Activated naive CD8-positive, alpha-beta T cell treated with anti-CD3 and anti-CD28 coated beads, Interleukin-2, amount 10 ng/mL, durations not matched to agents 7 days and 5 days (primary cell): ENCODE measurements at regions of chr12 and their contacts with region 1.

Region 1: GRCh38 chr12:9647825-9648700 is 21.4 kb upstream of the CLEC2D start:
- DNase-seq: peak; percentile 96
- ATAC-seq: peak; percentile 76
- H3K4me3 Mint-ChIP-seq: peak overlapping the region; percentile 97
- H3K27ac Mint-ChIP-seq: peak overlapping the region; percentile 99
- H3K4me1 Mint-ChIP-seq: peaks cover 60% of the 10 kb centered on the region
- H3K27me3 Mint-ChIP-seq: no peaks in the 10 kb centered on the region

Region 2: DNA sequence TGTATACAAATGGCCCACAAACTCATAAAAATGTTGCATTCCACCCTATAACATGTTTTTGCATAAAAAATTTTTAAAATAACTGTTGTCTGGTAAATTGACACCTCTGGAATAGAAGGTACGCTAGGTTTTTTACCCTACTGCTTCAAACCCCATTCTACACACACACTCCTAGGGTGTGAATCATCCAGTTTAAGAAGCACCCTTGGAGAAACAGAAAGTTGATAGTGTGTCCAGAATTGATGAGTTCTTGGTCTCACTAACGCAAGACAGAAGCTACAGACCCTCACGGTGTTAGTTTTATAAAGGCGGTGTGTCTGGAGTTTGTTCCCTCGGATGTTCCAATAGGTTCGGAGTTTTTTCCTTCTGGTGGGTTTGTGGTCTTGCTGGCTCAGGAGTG is 198.9 kb before region 1 on chr12:
- POLR2A ChIA-PET with region 1: interaction called, 19 read pairs
- DNase-seq: no peak
- ATAC-seq: no peak
- H3K4me3 Mint-ChIP-seq: peak overlapping the region; percentile 91
- H3K27ac Mint-ChIP-seq: peak overlapping the region; percentile 93
- H3K4me1 Mint-ChIP-seq: peaks cover 19% of the 10 kb centered on the region
- H3K27me3 Mint-ChIP-seq: no peaks in the 10 kb centered on the region

Region 3: GRCh38 chr12:9634177-9634803 is 13.8 kb before region 1 on chr12:
- POLR2A ChIA-PET with region 1: interaction called, 21 read pairs
- DNase-seq: no peak
- ATAC-seq: peak; percentile 81
- H3K4me3 Mint-ChIP-seq: peak overlapping the region; percentile 74
- H3K27ac Mint-ChIP-seq: peak overlapping the region; percentile 80
- H3K4me1 Mint-ChIP-seq: peaks cover 22% of the 10 kb centered on the region
- H3K27me3 Mint-ChIP-seq: peaks cover 2% of the 10 kb centered on the region

Region 4: GRCh38 chr12:9687228-9687627 is 39.2 kb after region 1 on chr12:
- POLR2A ChIA-PET with region 1: interaction called, 12 read pairs
- DNase-seq: no peak
- ATAC-seq: no peak
- H3K4me3 Mint-ChIP-seq: no peak overlapping the region
- H3K27ac Mint-ChIP-seq: no peak overlapping the region
- H3K4me1 Mint-ChIP-seq: peaks cover 64% of the 10 kb centered on the region
- H3K27me3 Mint-ChIP-seq: no peaks in the 10 kb centered on the region

Region 5: DNA sequence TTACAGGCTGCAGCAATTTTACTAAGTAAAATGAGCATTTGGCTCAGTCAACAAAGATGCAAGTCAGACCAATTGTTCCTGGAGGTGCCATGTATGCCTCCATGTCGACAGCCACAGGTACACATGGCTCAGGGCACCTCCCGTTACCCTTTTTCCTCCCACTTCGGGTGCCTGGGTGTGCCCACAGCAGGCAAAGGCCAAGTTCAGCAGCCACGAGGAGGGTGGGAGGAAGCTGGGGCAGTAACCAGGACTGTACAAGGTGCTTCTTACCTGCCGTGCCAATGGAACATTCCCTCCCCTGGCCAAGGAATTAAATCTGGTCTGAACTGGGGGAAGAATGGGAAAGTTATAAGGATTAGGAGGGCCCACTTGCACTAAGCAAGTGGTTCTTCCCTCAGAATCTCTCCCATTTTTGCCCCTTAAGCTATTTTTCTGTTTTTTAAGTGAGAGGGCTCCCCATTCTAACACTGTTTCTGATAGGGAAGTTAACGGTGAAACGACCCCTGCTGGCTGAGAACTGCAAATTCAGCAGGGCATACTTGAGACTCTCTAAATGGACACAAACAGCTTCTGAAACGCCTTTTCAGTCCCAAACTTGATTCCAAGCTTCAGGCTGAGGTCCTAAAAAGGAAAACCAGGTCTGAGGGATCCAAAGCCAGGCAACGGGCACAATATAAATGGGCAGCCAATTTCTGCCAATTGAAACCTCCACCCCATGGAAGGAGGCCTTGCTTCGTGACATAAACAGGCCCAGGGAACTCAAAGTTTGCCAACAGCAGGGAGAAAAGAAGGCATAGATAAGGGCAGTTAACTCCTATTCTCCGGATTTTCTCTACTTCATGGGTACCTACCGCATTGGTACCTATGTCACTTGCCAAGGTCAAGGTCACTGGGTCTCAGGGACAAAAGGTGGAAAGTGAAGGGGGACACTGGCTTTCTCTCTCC is 60.1 kb after region 1 on chr12:
- POLR2A ChIA-PET with region 1: interaction called, 14 read pairs
- DNase-seq: peak; percentile 67
- ATAC-seq: peak; percentile 76
- H3K4me3 Mint-ChIP-seq: peak overlapping the region; percentile 79
- H3K27ac Mint-ChIP-seq: peak overlapping the region; percentile 82
- H3K4me1 Mint-ChIP-seq: peaks cover 38% of the 10 kb centered on the region
- H3K27me3 Mint-ChIP-seq: no peaks in the 10 kb centered on the region

Region 6: GRCh38 chr12:9750276-9751203 is 102.5 kb after region 1 on chr12:
- POLR2A ChIA-PET with region 1: interaction called, 107 read pairs
- DNase-seq: peak; percentile 59
- ATAC-seq: peak; percentile 62
- H3K4me3 Mint-ChIP-seq: peak overlapping the region; percentile 77
- H3K27ac Mint-ChIP-seq: peak overlapping the region; percentile 75
- H3K4me1 Mint-ChIP-seq: peaks cover 47% of the 10 kb centered on the region
- H3K27me3 Mint-ChIP-seq: no peaks in the 10 kb centered on the region

Region 7: GRCh38 chr12:9797722-9798619 is 149.9 kb after region 1 on chr12:
- POLR2A ChIA-PET with region 1: interaction called, 11 read pairs
- DNase-seq: no peak
- ATAC-seq: peak; percentile 84
- H3K4me3 Mint-ChIP-seq: peak overlapping the region; percentile 35
- H3K27ac Mint-ChIP-seq: peak overlapping the region; percentile 68
- H3K4me1 Mint-ChIP-seq: peaks cover 39% of the 10 kb centered on the region
- H3K27me3 Mint-ChIP-seq: peaks cover 4% of the 10 kb centered on the region

Region 8: GRCh38 chr12:10012630-10013330 is 364.7 kb after region 1 on chr12:
- POLR2A ChIA-PET with region 1: no interaction called
- DNase-seq: no peak
- ATAC-seq: no peak
- H3K4me3 Mint-ChIP-seq: no peak overlapping the region
- H3K27ac Mint-ChIP-seq: no peak overlapping the region
- H3K4me1 Mint-ChIP-seq: peaks cover 9% of the 10 kb centered on the region
- H3K27me3 Mint-ChIP-seq: peaks cover 45% of the 10 kb centered on the region